Ovary (tissue), 10 donors: ENCODE measurements at regions of chr1 and their contacts with region 1.

Region 1: GRCh38 chr1:153071511-153071910 is at the start of gene SPRR2B:
- DNase-seq: no peak
- H3K4me3 ChIP-seq: no peak within 1 kb of the TSS
- H3K27ac ChIP-seq: no peak within 1 kb of the TSS
- H3K4me1 ChIP-seq: no peaks in the 10 kb centered on the region
- H3K27me3 ChIP-seq: no peaks in the 10 kb centered on the region
- CTCF ChIP-seq: no peak
- EP300 ChIP-seq: no peak
- POLR2A ChIP-seq: no peak
- total RNA-seq, gene SPRR2B: 1.1 to 3.8 (median 1.7) TPM in 4 of 7 donors, not detected in the others

Region 2: GRCh38 chr1:153094426-153094825 is 22.9 kb after region 1 on chr1 and contains the start of gene SPRR2E:
- intact Hi-C with region 1: loop called in 1 of 4 experiments (anchors 1 kb)
- DNase-seq: no peak
- H3K4me3 ChIP-seq: no peak within 1 kb of the TSS
- H3K27ac ChIP-seq: no peak within 1 kb of the TSS
- H3K4me1 ChIP-seq: no peaks in the 10 kb centered on the region
- H3K27me3 ChIP-seq: no peaks in the 10 kb centered on the region
- CTCF ChIP-seq: no peak
- EP300 ChIP-seq: no peak
- POLR2A ChIP-seq: no peak
- total RNA-seq, gene SPRR2E: 0.63 to 1.5 (median 1.2) TPM in 4 of 7 donors, not detected in the others

Region 3: DNA sequence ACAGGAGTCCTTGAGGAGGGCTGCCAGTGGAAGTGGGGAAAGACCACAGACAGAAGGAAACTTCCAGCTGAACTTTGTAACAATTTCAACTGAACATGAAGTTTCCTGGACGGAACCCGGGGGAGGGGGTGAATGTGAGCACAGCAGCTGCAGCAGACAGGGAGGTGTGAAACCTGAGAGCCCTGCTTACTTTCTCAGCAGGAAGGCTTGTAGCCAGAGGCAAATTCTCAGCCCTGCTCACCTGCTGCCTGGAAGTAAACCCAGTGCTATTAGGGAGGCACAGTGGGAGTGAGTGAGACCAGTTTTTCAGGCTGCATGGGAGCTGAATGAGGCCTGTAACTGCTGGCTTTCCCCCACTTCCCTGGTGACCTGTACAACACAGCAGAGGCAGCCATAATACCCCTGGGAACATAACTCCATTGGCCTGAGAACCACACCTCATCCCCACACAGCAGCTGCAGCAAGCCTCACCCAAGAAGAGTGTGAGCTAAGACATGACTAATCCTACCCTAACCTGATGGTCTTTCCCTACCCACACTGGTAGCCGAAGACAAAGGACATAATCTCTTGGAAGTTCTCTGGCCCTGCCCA is 51.4 kb after region 1 on chr1:
- intact Hi-C with region 1: no loop called
- DNase-seq: peak; percentile 62 to 76 (median 71)
- H3K4me3 ChIP-seq: no peak overlapping the region
- H3K27ac ChIP-seq: peak overlapping the region in 1 of 2 donors; percentile 56
- H3K4me1 ChIP-seq: peaks cover 3% of the 10 kb centered on the region
- H3K27me3 ChIP-seq: no peaks in the 10 kb centered on the region
- CTCF ChIP-seq: no peak
- EP300 ChIP-seq: no peak
- POLR2A ChIP-seq: no peak